AG04449 (cell line): ENCODE measurements at regions of chr5 and their contacts with region 1.

Region 1: GRCh38 chr5:179343719-179344430 is 1.4 kb downstream of the ADAMTS2 start:
- DNase-seq: no peak
- H3K4me3 ChIP-seq: peak overlapping the region; percentile 78
- CTCF ChIP-seq: peak; percentile 84

Region 2: GRCh38 chr5:178965465-178966055 is 378.3 kb before region 1 on chr5:
- CTCF ChIA-PET with region 1: no interaction called
- POLR2A ChIA-PET with region 1: no interaction called
- DNase-seq: no peak
- H3K4me3 ChIP-seq: no peak overlapping the region
- CTCF ChIP-seq: no peak

Region 3: DNA sequence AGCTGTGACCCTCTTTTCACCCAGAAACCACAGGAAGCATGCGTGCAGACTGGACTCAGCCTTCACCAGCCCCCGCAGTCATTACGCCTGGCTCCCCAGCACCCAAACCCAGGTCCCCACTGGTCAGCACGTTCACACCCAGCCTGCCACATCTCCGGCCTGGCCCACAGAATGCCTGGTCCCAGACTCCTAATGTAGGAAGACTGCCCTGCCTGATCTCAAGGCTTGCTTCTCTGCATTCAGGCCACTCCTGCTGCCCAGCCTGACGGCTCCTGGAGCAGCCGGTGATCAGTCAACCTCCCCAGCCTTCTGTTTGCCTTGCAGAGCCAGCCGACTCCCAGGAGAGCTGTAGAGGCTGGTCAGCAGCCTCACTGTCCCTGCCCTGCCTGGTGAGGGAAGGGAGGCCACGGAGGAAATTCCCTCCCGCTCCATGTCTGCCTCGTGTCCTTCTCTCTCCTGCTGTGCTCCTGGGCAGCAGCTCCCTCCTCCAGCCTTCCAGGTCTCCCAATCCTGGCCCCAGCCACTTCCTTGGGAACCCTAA is 24.1 kb before region 1 on chr5:
- CTCF ChIA-PET with region 1: interaction called, 10 read pairs
- POLR2A ChIA-PET with region 1: no interaction called
- DNase-seq: no peak
- H3K4me3 ChIP-seq: no peak overlapping the region
- CTCF ChIP-seq: no peak

Region 4: GRCh38 chr5:179404321-179405053 is 60.6 kb after region 1 on chr5:
- CTCF ChIA-PET with region 1: interaction called, 10 read pairs
- POLR2A ChIA-PET with region 1: no interaction called
- DNase-seq: no peak
- H3K4me3 ChIP-seq: no peak overlapping the region
- CTCF ChIP-seq: peak; percentile 65